Activated CD8-positive, alpha-beta T cell treated with anti-CD3 and anti-CD28 coated beads for 36 hours (primary cell): ENCODE measurements at regions of chr18 and their contacts with region 1.

Region 1: DNA sequence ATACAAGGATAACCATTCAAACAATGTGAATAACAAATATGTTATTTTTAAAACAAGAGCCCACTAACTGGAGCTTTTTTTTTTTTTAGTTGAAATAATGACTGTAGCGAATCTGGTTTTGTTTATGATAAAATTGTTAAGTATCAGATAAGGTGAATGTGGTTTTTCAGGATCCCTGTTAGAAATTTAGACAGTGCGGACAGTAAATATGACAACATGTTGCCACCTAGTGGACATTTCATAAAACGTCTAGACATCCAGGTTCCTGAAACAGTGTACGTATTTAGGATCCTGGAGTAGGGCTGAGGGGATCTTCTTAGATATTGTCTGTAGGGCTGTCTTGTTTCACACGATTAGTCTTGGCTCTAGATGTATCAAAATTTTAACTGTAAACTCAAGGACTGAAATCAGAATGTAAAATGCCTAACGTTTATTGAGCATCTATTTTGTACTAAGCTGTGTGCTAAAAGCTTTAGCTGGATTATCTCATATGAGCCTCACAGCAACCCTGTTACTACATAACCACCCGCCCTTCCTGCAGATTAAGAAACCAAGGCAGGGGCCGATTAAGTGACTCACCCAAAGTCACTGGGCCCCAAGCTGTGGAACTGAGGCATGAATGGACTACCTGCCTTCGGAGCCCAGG is 23.9 kb upstream of the CCDC68 start:
- DNase-seq: no peak
- ATAC-seq: no peak
- H3K4me3 Mint-ChIP-seq: no peak overlapping the region
- H3K27ac Mint-ChIP-seq: no peak overlapping the region
- H3K4me1 Mint-ChIP-seq: no peaks in the 10 kb centered on the region
- H3K27me3 Mint-ChIP-seq: peaks cover 9% of the 10 kb centered on the region
- CTCF ChIP-seq: peak; percentile 68

Region 2: GRCh38 chr18:54444319-54444914 is 538.7 kb before region 1 on chr18:
- CTCF ChIA-PET with region 1: interaction called, 4 read pairs
- POLR2A ChIA-PET with region 1: no interaction called
- intact Hi-C with region 1: loop called (anchors 10 kb)
- DNase-seq: peak; percentile 61
- ATAC-seq: peak; percentile 42
- H3K4me3 Mint-ChIP-seq: no peak overlapping the region
- H3K27ac Mint-ChIP-seq: no peak overlapping the region
- H3K4me1 Mint-ChIP-seq: no peaks in the 10 kb centered on the region
- H3K27me3 Mint-ChIP-seq: peaks cover 15% of the 10 kb centered on the region
- CTCF ChIP-seq: peak; percentile 73

Region 3: DNA sequence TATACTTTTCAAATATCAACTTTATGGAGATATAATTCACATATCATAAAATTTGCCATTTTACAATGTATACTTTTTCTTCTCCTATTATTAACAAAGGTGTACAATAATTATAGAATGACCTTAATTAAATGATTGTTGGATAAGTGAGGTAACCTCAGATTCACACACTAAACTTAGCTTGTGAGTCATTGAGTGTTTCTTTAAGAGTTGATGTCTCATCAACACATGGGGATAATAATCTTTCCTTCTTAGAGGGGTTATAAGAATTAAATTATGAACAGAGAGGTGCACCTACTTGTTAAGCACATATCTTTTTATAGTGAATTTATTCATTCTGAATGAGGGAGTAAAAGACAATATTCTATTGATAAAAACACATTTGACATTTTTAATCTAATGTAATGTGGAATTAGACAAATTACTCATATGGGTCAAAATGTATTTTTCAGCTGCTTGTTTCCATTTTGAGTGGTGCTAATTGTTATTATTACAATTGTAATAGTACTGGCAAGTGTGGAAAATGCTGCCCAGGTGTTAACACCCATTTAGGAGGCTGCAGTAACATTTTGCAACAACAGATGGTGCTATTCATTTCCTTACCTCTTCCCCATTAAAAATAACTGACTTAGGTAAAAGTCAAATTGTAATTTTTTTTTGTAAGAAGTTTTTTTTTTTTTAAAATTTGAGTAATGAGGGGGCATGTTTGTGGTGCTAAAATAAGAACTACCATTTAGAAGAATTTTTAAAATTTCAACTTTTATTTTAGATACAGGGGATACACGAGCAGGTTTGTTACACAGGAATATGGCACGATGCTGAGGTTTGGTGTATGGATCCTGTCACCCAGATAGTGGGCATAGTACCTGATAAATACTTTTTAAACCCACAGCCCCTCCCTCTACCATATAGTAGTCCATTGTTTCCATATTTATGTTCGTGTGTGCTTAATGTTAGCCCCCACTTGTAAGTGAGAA is 424.3 kb before region 1 on chr18:
- CTCF ChIA-PET with region 1: interaction called, 4 read pairs
- POLR2A ChIA-PET with region 1: no interaction called
- intact Hi-C with region 1: loop called (anchors 5 kb)
- DNase-seq: peak; percentile 4
- ATAC-seq: no peak
- H3K4me3 Mint-ChIP-seq: no peak overlapping the region
- H3K27ac Mint-ChIP-seq: no peak overlapping the region
- H3K4me1 Mint-ChIP-seq: no peaks in the 10 kb centered on the region
- H3K27me3 Mint-ChIP-seq: peaks cover 4% of the 10 kb centered on the region
- CTCF ChIP-seq: peak; percentile 83

Region 4: GRCh38 chr18:54679318-54680149 is 303.6 kb before region 1 on chr18:
- CTCF ChIA-PET with region 1: interaction called, 17 read pairs
- POLR2A ChIA-PET with region 1: no interaction called
- intact Hi-C with region 1: loop called (anchors 5 kb)
- DNase-seq: no peak
- ATAC-seq: peak; percentile 42
- H3K4me3 Mint-ChIP-seq: no peak overlapping the region
- H3K27ac Mint-ChIP-seq: no peak overlapping the region
- H3K4me1 Mint-ChIP-seq: peaks cover 2% of the 10 kb centered on the region
- H3K27me3 Mint-ChIP-seq: no peaks in the 10 kb centered on the region
- CTCF ChIP-seq: peak; percentile 58

Region 5: GRCh38 chr18:54972690-54973445 is 10.3 kb before region 1 on chr18:
- CTCF ChIA-PET with region 1: interaction called, 11 read pairs
- POLR2A ChIA-PET with region 1: no interaction called
- intact Hi-C with region 1: no loop called
- DNase-seq: no peak
- ATAC-seq: no peak
- H3K4me3 Mint-ChIP-seq: no peak overlapping the region
- H3K27ac Mint-ChIP-seq: no peak overlapping the region
- H3K4me1 Mint-ChIP-seq: no peaks in the 10 kb centered on the region
- H3K27me3 Mint-ChIP-seq: peaks cover 1% of the 10 kb centered on the region
- CTCF ChIP-seq: no peak

Region 6: DNA sequence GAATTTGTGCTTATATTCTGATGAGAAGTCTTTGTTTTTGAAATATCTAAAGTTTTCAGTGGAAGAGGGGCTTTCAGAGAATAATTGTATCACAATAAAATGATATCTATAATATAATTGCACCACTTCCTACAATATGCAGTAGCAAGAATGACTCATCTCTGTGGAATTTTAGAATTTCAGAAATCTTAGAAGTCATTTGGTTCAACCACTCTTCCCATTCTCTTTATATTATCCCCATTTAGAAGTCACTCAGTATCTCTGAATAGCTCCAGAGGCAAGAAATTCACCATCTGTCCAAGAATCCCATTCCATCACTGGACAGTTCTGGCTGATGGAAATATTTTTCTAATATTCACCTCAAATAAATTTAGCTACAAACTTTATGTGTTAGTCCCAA is 35.4 kb after region 1 on chr18:
- CTCF ChIA-PET with region 1: no interaction called
- POLR2A ChIA-PET with region 1: no interaction called
- intact Hi-C with region 1: no loop called
- DNase-seq: no peak
- ATAC-seq: no peak
- H3K4me3 Mint-ChIP-seq: no peak overlapping the region
- H3K27ac Mint-ChIP-seq: no peak overlapping the region
- H3K4me1 Mint-ChIP-seq: no peaks in the 10 kb centered on the region
- H3K27me3 Mint-ChIP-seq: peaks cover 4% of the 10 kb centered on the region
- CTCF ChIP-seq: no peak